ENCODE measurements at regions of chr3 and their contacts with region 1.

Region 1: DNA sequence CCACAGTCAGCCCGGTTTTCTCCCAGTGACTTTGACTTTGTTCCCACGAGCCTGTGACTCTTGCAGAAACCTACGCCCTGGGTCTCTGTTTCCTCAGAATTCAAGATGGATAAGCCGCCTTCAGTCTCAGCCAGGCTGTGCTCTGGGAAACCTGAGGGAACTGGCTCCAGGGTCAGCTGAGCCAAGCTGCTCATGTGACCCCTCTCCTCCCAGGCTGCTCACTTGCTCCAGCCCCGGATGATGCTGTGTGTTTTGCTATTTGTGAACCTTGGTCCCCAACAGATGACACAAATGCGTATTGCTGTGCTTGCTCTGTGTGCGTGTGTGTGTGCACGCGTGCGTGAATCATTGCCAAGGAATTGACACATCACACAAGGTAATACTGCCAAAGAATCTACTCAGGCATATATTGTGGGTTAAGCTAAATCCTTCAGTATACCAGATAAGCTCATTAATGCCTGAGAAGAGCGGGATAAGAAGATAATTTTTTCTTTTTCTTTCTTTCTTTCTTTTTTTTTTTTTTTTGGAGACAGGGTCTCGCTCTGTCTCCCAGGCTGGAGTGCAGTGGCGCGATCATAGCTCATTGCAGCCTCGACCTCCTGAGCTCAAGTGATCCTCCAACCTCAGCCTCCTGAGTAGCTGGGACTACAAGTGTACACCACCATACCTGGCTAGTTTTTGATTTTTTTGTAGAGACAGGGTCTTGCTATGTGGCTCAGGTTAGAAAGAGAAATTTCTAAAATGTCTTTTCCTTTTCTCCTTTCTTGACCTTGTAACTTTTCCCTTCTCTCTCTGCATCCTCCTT is 29.2 kb upstream of the UMPS start:
- DNase-seq: no peak

Region 2: GRCh38 chr3:124714223-124714853 is 13.3 kb after region 1 on chr3:
- CTCF ChIA-PET with region 1: interaction called, 11 read pairs
- POLR2A ChIA-PET with region 1: no interaction called
- DNase-seq: no peak

Measured in HEK293T (cell line).